ENCODE measurements at regions of chr6 and their contacts with region 1.

Region 1: DNA sequence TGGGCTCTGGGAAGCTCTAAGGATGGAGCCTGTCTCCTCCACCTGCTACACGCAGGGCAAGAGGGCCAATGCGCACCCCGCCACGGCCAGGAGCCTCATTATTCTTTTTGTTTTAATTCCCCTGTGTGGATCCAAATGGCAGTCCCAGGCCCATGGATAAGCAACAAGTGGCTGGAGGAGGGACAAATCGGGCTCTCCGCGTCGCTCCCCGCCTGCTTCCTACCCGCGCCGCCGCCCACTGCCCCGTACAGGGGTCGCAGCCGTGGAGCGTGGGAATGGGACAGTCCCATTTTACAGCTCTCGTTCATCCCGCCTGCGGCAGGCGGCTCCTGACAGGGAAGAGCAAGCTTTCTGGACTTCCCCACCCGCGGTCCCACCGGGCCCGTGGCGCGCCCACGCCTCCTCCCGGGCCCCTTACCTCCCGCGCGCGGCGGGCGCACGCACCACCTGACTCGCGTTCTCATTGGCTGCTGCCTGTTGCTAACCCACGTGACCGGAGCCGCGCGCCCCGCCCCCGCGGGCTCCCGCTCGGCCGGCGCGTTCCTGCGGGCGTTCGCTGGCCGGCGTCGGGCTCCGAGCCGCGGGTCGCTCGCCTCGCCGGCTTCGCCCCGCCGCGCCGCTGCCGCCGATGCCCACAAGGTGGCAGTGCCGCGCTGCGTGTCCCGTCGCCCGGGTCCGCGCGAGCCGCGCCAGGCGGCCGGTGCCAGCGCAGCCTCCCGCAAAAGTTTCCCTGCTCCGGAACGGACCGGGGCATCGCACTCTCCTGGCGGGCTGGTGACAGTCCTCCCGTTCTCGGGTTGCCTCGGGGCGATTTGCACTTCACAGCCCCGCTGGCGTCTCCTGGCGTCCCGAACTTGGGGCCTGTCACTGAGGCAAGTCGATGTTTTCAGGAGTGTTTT is 93.3 kb downstream of the CD83 start:
- DNase-seq: peak; percentile 96 to 97
- ATAC-seq: peak; percentile 96
- H3K4me3 ChIP-seq: peak overlapping the region; percentile 25 to 40
- H3K27ac ChIP-seq: no peak overlapping the region
- H3K4me1 ChIP-seq: no peaks in the 10 kb centered on the region
- H3K27me3 ChIP-seq: no peaks in the 10 kb centered on the region

Region 2: DNA sequence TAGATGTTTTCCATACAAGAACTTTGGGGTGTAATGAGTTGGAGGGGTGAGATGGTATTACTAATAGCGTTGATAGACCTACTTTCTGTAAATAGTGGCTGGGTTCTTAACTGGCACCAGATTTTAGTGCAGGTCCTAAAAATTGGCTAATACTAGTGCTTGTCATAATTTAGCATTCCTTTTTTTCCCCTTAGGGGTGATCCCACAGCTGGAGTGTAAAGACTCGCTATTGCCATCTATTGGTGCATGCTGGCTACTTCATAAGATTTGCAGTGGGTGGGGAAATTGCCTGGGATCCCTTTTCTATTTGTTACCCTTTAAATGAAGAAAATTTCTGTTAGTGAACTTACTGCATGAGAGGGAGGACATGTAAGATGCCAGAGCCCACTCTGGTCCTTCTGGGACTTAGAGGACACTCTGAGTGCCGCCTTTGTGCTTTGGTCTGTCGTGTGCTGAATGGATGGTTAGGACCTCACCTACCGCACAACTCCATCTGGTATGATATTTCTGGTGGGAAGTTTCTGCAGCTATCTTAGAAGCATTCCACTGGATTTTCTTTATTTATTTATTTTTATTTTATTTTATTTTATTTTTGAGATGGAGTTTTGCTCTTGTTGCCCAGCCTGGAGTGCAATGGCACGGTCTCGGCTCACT is 1230.4 kb after region 1 on chr6:
- intact Hi-C with region 1: loop called in 1 of 2 experiments (anchors 5 kb)
- DNase-seq: no peak
- ATAC-seq: peak; percentile 83
- H3K4me3 ChIP-seq: no peak overlapping the region
- H3K27ac ChIP-seq: no peak overlapping the region
- H3K4me1 ChIP-seq: peaks cover 0 to 3% of the 10 kb centered on the region in 2 donors
- H3K27me3 ChIP-seq: no peaks in the 10 kb centered on the region

Region 3: DNA sequence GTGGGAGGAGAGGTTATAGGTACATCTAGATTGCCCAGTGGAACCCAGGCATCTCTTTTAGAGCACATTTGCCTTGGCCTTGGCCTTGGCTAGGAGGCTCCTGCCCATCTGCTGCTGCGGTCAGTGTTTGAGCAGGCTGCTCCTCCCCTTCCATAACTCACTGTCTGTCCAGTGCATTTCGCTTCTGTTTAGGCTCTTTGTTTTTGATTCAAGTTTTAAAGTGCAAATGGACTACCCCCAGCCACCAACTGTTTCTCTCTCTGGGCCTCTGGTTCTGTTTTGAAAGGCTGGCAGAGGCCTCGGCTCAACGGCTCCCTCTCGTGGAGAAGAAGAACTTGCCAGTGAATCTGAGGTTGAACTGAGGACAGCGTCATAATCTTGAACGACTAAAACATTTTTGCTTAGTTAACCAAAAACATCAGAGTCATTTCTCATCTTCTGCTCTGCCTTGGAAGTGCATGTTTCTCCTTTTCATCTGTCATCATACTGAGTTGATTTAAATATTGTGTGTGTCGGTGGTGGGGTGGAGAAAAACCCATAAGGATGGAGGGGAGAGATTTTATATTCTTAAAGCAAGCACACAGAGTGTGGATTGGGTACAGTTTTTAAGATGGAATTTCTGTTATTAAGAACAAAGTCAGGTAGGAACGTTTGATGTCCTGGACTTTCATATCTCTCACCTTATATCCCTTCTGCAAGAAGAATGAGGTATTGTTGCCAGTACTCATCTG is 1280.5 kb after region 1 on chr6:
- intact Hi-C with region 1: loop called in 1 of 2 experiments (anchors 2 kb)
- DNase-seq: peak in 1 of 2 donors; percentile 82
- ATAC-seq: peak; percentile 85
- H3K4me3 ChIP-seq: no peak overlapping the region
- H3K27ac ChIP-seq: no peak overlapping the region
- H3K4me1 ChIP-seq: no peaks in the 10 kb centered on the region
- H3K27me3 ChIP-seq: no peaks in the 10 kb centered on the region

Measured in aorta (tissue), 5 donors.